Prostate gland (tissue), 2 donors: ENCODE measurements at regions of chr2 and their contacts with region 1.

Region 1: DNA sequence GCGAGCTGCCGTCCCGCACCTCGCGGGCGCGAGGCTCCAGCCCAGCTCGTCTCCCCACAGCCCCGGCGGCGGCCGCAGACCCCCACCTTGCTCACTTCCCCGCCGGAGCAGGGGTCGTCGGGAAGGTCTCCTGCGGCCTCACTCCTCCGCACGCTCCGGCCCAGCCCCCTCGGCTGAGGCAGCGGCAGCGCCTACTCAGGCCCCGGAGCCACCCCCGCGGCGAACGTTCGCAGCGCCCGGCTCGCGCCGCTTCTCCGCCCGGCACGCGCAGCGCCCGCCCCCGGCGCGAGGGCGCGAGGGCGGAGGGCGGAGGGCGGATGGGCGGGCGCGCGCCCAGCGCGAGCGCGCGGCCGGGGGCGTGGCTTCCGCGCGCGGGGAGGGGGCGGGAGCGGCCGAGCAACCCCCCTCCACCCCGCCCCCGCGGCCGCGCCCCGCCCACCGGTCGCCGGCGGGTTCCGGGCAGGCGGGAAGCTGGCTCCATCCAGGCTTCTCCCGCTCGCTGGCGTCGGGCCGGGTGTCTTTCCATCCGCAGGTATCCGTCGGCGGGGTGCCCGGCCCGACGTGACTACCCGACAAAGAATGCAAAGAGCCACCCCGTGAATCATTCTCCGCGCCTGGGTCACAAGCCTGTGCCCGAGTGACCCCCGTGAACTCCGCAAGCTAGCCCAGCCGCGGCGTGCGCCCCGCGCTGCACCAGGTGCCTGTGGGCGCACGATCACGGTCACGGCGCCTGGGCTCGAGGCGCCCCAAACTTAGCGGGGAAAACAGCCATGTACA is at the start of gene DTNB:
- DNase-seq: peak; percentile 89
- H3K4me3 ChIP-seq: peak within 1 kb of the TSS; percentile 86 to 98
- H3K27ac ChIP-seq: peak within 1 kb of the TSS; percentile 82 to 89
- H3K4me1 ChIP-seq: peaks cover 7% of the 10 kb centered on the region
- H3K27me3 ChIP-seq: no peaks in the 10 kb centered on the region
- CTCF ChIP-seq: no peak
- POLR2A ChIP-seq: peak; percentile 66
- total RNA-seq, gene DTNB: 47.0 to 61.9 TPM

Region 2: GRCh38 chr2:25878361-25879132 is 205.1 kb after region 1 on chr2 and contains the start of gene ASXL2:
- intact Hi-C with region 1: loop called (anchors 10 kb)
- DNase-seq: peak; percentile 97
- H3K4me3 ChIP-seq: peak within 1 kb of the TSS; percentile 71 to 91
- H3K27ac ChIP-seq: peak within 1 kb of the TSS; percentile 87 to 92
- H3K4me1 ChIP-seq: no peaks in the 10 kb centered on the region
- H3K27me3 ChIP-seq: no peaks in the 10 kb centered on the region
- CTCF ChIP-seq: peak in 2 of 4 experiments; percentile 37 to 40
- POLR2A ChIP-seq: peak; percentile 66
- total RNA-seq, gene ASXL2: 15.8 to 36.1 TPM

Region 3: GRCh38 chr2:26054598-26055348 is 381.3 kb after region 1 on chr2:
- intact Hi-C with region 1: no loop called
- DNase-seq: no peak
- H3K4me3 ChIP-seq: no peak overlapping the region
- H3K27ac ChIP-seq: no peak overlapping the region
- H3K4me1 ChIP-seq: no peaks in the 10 kb centered on the region
- H3K27me3 ChIP-seq: no peaks in the 10 kb centered on the region
- CTCF ChIP-seq: no peak
- POLR2A ChIP-seq: no peak